ENCODE measurements at regions of chr9 and their contacts with region 1.

Region 1: DNA sequence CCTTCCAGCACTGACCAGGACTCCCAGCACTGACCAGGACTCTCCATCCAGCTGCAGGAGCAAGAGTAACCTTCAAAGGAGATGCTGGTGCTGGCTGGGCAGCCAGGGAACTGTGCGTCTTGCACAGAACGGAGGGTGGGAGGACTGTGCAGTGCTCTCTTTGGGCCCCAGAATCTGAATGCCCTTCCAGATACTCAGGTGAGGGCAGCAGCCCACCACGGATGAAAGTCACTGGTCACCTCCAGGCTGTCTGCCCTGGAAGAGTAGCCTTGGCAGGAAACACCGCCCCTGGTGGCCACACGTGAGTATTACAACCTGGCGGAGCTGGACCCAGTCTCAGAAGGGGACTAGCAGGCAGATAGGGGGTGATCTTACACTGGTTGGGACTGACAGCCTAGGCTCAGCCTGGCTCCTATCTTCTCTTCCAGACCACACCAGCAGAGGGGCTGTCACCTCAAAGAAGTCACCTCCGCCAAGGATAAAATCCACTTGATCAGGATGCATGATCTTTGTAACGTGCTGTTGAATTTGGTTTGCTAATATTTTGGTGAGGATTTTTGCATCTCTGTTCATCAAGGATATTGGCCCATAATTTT is 4.8 kb upstream of the SARDH start:
- DNase-seq: no peak
- H3K4me3 ChIP-seq: no peak overlapping the region
- H3K27me3 ChIP-seq: peaks cover 2% of the 10 kb centered on the region
- CTCF ChIP-seq: peak; percentile 99

Region 2: GRCh38 chr9:133470427-133470924 is 272.5 kb before region 1 on chr9:
- CTCF ChIA-PET with region 1: no interaction called
- POLR2A ChIA-PET with region 1: no interaction called
- DNase-seq: no peak
- H3K4me3 ChIP-seq: no peak overlapping the region
- H3K27me3 ChIP-seq: no peaks in the 10 kb centered on the region
- CTCF ChIP-seq: no peak

Region 3: DNA sequence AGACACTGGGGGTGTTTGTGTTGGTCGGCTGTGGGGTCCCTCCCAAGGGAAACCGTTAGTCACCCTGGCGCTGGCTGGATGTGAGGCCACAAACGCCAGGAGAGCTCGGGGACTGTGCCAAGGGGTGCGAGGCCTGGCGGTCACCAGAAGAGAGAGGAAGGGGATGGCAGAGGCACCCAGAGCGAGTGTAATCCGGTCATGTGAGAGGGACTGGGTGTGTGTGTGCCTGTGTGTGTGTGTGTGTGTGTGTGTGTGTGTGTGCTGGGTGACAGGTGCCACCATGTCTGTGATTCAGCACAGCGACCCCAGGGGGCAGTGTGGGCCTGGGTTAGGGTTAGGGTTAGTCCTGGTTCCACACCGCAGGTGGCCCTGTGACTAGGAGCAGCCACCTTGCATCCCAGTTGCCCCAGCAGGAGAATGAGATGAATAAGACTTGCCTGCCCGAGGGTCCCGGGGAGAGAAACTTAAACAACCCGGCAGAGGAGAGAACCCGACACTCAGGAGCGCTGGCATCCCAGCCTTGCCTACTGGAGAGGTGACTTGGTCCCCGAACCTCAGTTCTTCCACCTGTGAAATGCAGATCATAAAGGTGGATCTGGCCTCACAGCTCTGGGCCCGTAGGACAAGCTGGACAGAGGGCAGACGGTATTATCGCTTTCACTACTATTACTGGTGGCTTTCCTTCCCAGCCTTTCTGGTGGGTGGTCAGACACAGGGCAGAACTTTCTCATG is 209.8 kb before region 1 on chr9:
- CTCF ChIA-PET with region 1: interaction called, 14 read pairs
- POLR2A ChIA-PET with region 1: no interaction called
- DNase-seq: no peak
- H3K4me3 ChIP-seq: no peak overlapping the region
- H3K27me3 ChIP-seq: peaks cover 39% of the 10 kb centered on the region
- CTCF ChIP-seq: peak; percentile 64

Region 4: DNA sequence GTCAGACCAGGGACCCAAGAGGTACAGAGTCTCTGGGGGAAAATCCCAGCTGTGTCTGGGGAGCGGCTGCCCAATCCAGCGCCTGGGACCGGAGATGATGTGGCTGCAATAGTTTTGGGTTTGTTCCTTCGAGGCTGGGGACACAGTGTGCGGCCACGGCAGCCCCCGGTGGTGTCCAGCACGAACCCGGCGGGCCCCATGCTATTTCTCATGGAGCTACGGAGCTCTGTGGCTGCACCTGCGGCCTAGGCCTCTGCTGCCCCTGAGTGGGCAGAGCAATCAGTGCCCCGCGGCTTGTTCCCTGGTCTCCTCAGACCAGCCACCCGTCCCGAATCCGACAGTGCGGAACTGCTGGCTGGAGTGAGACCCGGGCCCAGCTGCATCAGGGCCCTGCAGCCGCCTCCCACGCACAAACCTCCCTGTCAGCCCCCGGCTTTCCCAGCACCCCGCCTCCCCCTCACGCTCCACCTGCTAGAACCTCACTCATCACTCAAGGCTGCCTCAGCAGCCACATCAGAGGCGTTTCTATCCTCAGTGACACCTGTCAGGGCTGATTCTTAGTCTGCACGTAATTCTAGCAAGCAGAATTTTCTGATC is 33.8 kb before region 1 on chr9:
- CTCF ChIA-PET with region 1: no interaction called
- POLR2A ChIA-PET with region 1: no interaction called
- DNase-seq: no peak
- H3K4me3 ChIP-seq: no peak overlapping the region
- H3K27me3 ChIP-seq: no peaks in the 10 kb centered on the region
- CTCF ChIP-seq: no peak

Region 5: GRCh38 chr9:133726401-133727276 is 16.3 kb before region 1 on chr9:
- CTCF ChIA-PET with region 1: interaction called, 25 read pairs
- POLR2A ChIA-PET with region 1: no interaction called
- DNase-seq: no peak
- H3K4me3 ChIP-seq: no peak overlapping the region
- H3K27me3 ChIP-seq: no peaks in the 10 kb centered on the region; the same call in none of the 2 replicates
- CTCF ChIP-seq: peak; percentile 61

Region 6: GRCh38 chr9:133731876-133732638 is 10.9 kb before region 1 on chr9:
- CTCF ChIA-PET with region 1: interaction called, 25 read pairs
- POLR2A ChIA-PET with region 1: no interaction called
- DNase-seq: no peak
- H3K4me3 ChIP-seq: no peak overlapping the region
- H3K27me3 ChIP-seq: peaks cover 2% of the 10 kb centered on the region
- CTCF ChIP-seq: no peak

Region 7: DNA sequence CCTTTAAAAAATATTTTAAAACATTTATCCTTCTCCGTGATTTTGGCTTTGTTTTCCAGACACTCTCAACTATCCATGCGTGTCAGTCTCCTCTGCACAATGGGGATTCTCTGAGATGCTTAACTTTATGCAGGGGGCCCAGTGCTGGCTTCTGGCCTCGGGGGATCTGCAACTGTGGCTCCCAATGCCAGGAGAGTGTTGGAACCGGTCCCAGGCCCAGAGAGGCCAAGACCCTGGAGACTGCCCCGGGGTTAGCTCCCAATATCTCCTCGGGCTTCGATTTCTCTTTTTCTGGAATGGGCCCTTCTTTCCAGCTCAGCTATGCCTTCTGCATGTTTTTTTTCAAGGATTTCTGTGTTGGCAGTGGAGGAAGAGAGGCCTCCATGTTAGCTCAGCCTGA is 15.3 kb after region 1 on chr9:
- CTCF ChIA-PET with region 1: interaction called, 31 read pairs
- POLR2A ChIA-PET with region 1: no interaction called
- DNase-seq: no peak
- H3K4me3 ChIP-seq: no peak overlapping the region
- H3K27me3 ChIP-seq: no peaks in the 10 kb centered on the region
- CTCF ChIP-seq: no peak

Region 8: DNA sequence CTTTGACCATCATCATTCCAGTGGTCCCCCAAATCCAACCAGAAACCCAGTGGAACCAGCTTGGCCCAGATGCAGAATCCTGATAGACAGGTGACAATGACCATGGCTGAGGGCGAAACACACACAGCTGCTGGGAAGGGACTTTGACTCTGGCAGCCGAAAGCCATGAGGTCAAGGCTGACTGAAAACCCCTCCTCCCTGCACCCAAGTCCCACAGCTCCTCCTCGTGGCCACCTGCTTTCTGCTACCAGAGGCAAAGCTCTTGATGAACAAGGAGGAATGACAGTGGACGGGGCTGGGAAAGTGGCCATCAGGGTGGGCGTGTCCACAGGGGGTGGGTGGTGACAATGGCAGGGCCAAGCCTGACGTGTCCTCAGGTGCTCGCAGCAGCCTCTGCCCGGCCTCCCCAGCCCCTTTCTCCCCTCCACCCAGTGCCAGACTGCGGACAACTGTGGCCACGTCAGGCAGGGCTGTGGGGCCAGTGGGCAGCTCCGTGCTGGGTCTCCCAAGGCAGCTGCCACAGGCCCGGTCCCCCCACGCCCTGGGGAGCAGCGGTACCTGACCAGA is 26.0 kb after region 1 on chr9:
- CTCF ChIA-PET with region 1: interaction called, 10 read pairs
- POLR2A ChIA-PET with region 1: no interaction called
- DNase-seq: no peak
- H3K4me3 ChIP-seq: no peak overlapping the region
- H3K27me3 ChIP-seq: no peaks in the 10 kb centered on the region
- CTCF ChIP-seq: no peak